Activated B cell treated with CpG ODN at 0.5 μM for 24 hours (primary cell): ENCODE measurements at regions of chr12 and their contacts with region 1.

Region 1: GRCh38 chr12:51531978-51532497 is 59.0 kb upstream of the SCN8A start:
- DNase-seq: peak; percentile 56
- ATAC-seq: peak; percentile 97
- H3K4me3 Mint-ChIP-seq: no peak overlapping the region
- H3K27ac Mint-ChIP-seq: no peak overlapping the region
- H3K4me1 Mint-ChIP-seq: peaks cover 11% of the 10 kb centered on the region
- H3K27me3 Mint-ChIP-seq: peaks cover 28% of the 10 kb centered on the region
- CTCF ChIP-seq: peak; percentile 51

Region 2: DNA sequence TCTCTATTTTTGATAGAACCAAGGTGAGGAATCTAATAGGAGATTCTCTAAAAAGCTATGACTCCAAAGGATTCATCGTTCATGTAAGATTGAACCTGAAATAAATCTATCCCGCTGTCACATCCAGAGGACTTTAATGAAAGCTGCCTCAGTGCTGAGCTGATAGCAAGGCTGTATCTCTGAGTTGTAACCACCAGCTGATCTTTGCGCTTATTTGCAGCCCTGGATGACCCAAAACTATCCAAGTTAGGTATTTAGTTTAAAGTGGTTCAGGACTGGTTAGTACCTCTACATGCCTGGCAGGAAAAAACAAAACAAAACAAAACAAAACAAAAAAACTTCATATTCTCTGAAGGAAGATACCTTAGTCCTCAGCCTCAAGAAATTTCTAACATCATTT is 347.1 kb after region 1 on chr12:
- CTCF ChIA-PET with region 1: no interaction called
- POLR2A ChIA-PET with region 1: no interaction called
- intact Hi-C with region 1: loop called (anchors 5 kb)
- DNase-seq: no peak
- ATAC-seq: no peak
- H3K4me3 Mint-ChIP-seq: no peak overlapping the region
- H3K27ac Mint-ChIP-seq: no peak overlapping the region
- H3K4me1 Mint-ChIP-seq: no peaks in the 10 kb centered on the region
- H3K27me3 Mint-ChIP-seq: peaks cover 10% of the 10 kb centered on the region
- CTCF ChIP-seq: no peak